ENCODE measurements at regions of chr5 and their contacts with region 1.

Region 1: DNA sequence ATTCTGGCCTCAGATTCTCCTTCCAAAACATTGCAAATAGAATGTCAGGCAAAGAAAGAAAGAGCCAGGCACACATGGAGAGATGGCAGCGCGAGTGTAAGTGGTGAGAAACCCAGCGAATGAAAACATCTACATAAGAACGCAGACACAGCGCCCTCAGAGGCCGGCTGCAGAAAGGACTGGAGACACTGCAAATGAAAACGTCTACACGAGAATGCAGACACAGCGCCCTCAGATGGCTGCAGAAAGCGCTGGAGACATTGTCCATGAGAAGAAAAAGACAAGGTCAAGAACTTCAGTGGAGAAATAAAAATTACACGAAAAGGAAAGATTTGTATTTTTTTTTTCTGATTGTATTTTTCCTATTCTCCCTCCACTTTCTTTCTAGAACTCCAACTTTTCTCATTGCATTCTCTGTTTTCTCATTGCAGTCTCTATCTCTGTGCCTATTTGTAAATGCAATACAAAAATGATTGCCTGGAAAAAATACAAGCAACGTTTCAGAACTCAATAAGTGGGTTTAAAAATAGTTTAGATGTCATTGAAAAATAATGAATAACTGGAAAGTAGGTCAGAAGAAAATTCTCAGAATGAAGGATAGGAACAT is 117.9 kb upstream of the LPCAT1 start:
- DNase-seq: peak; percentile 21
- ATAC-seq: peak; percentile 90
- H3K4me3 ChIP-seq: no peak overlapping the region
- H3K27ac ChIP-seq: no peak overlapping the region
- H3K4me1 ChIP-seq: no peaks in the 10 kb centered on the region
- H3K27me3 ChIP-seq: peaks cover 2 to 9% of the 10 kb centered on the region in 2 experiments; a peak in 2 of 4 replicates
- CTCF ChIP-seq: peak; percentile 90 to 99 (median 98); a peak in 5 of 6 replicates
- EP300 ChIP-seq: no peak
- POLR2A ChIP-seq: no peak
- RAD21 ChIP-seq: peak; percentile 91

Region 2: DNA sequence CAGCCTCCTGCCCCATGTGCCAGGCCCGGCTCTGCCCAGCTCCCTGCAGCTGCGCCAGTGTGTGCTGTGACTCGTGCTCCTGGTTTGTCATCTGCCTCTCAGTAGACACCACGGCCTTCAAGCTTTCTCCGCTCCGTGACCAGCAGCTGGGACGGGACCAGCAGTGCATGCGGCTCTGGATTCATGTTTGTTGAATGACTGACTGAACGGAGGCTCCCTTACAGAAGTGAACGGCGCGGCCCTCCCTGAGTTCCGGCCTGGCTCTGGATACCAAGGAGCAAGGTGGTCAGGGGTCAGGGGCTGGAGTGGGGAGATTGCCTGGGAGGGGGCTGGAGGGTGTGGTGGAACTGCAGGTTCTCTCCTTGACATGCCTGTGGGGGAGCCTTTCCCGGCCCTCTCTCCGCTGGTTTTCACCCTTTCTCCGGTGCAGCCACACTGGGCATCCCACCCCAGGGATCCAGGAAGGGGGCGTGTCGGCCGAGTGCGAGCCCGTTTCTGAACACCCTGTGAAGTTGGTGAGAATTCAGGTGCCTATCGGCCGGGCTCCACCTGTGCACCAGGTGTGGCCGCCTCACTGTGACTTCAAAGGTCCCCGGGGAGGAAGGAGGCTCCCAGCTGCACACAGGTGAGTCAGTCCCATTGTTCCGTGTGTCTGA is 1040.6 kb before region 1 on chr5:
- CTCF ChIA-PET with region 1: no interaction called
- POLR2A ChIA-PET with region 1: no interaction called
- RAD21 ChIA-PET with region 1: no interaction called
- SMC1A ChIA-PET with region 1: no interaction called
- in situ Hi-C with region 1: no loop called
- intact Hi-C with region 1: no loop called
- DNase-seq: no peak
- ATAC-seq: no peak
- H3K4me3 ChIP-seq: no peak overlapping the region
- H3K27ac ChIP-seq: no peak overlapping the region
- H3K4me1 ChIP-seq: no peaks in the 10 kb centered on the region
- H3K27me3 ChIP-seq: peaks cover 0 to 5% of the 10 kb centered on the region in 2 experiments; a peak in 2 of 4 replicates
- CTCF ChIP-seq: no peak
- EP300 ChIP-seq: no peak
- POLR2A ChIP-seq: no peak
- RAD21 ChIP-seq: no peak

Region 3: GRCh38 chr5:912280-913091 is 729.2 kb before region 1 on chr5:
- CTCF ChIA-PET with region 1: no interaction called
- POLR2A ChIA-PET with region 1: no interaction called
- RAD21 ChIA-PET with region 1: no interaction called
- SMC1A ChIA-PET with region 1: no interaction called
- in situ Hi-C with region 1: loop called (anchors 10 kb)
- intact Hi-C with region 1: no loop called
- DNase-seq: no peak
- ATAC-seq: no peak
- H3K4me3 ChIP-seq: no peak overlapping the region
- H3K27ac ChIP-seq: no peak overlapping the region
- H3K4me1 ChIP-seq: no peaks in the 10 kb centered on the region
- H3K27me3 ChIP-seq: no peaks in the 10 kb centered on the region
- CTCF ChIP-seq: peak in 1 of 3 experiments; percentile 29; a peak in 2 of 6 replicates
- EP300 ChIP-seq: no peak
- POLR2A ChIP-seq: peak; percentile 60
- RAD21 ChIP-seq: 0 out of 2 replicates have a peak, but pooled peaks have one; percentile 1

Region 4: GRCh38 chr5:1167728-1168709 is 473.6 kb before region 1 on chr5:
- CTCF ChIA-PET with region 1: interaction called, 14 read pairs
- POLR2A ChIA-PET with region 1: no interaction called
- RAD21 ChIA-PET with region 1: interaction called, 8 read pairs
- SMC1A ChIA-PET with region 1: interaction called, 8 read pairs
- in situ Hi-C with region 1: loop called (anchors 5 kb)
- intact Hi-C with region 1: loop called (anchors 2 kb)
- DNase-seq: no peak
- ATAC-seq: peak; percentile 93
- H3K4me3 ChIP-seq: no peak overlapping the region
- H3K27ac ChIP-seq: no peak overlapping the region
- H3K4me1 ChIP-seq: peaks cover 3% of the 10 kb centered on the region
- H3K27me3 ChIP-seq: no peaks in the 10 kb centered on the region; a peak in 1 of 4 replicates
- CTCF ChIP-seq: peak; percentile 71 to 89 (median 81)
- EP300 ChIP-seq: no peak
- POLR2A ChIP-seq: no peak
- RAD21 ChIP-seq: peak; percentile 82

Region 5: DNA sequence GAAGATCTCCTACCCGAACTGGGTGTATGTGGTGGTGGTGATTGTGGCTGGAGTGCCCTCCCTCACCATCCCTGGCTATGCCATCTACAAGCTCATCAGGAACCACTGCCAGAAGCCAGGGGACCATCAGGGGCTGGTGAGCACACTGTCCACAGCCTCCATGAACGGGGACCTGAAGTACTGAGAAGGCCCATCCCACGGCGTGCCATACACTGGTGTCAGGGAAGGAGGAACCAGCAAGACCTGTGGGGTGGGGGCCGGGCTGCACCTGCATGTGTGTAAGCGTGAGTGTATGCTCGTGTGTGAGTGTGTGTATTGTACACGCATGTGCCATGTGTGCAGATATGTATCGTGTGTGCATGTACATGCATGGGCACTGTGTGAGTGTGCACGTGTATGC is 419.9 kb before region 1 on chr5:
- CTCF ChIA-PET with region 1: no interaction called
- POLR2A ChIA-PET with region 1: no interaction called
- RAD21 ChIA-PET with region 1: no interaction called
- SMC1A ChIA-PET with region 1: no interaction called
- in situ Hi-C with region 1: no loop called
- intact Hi-C with region 1: no loop called
- DNase-seq: no peak
- ATAC-seq: no peak
- H3K4me3 ChIP-seq: no peak overlapping the region
- H3K27ac ChIP-seq: no peak overlapping the region
- H3K4me1 ChIP-seq: no peaks in the 10 kb centered on the region
- H3K27me3 ChIP-seq: no peaks in the 10 kb centered on the region; a peak in 1 of 4 replicates
- CTCF ChIP-seq: no peak
- EP300 ChIP-seq: no peak
- POLR2A ChIP-seq: no peak
- RAD21 ChIP-seq: no peak

Region 6: DNA sequence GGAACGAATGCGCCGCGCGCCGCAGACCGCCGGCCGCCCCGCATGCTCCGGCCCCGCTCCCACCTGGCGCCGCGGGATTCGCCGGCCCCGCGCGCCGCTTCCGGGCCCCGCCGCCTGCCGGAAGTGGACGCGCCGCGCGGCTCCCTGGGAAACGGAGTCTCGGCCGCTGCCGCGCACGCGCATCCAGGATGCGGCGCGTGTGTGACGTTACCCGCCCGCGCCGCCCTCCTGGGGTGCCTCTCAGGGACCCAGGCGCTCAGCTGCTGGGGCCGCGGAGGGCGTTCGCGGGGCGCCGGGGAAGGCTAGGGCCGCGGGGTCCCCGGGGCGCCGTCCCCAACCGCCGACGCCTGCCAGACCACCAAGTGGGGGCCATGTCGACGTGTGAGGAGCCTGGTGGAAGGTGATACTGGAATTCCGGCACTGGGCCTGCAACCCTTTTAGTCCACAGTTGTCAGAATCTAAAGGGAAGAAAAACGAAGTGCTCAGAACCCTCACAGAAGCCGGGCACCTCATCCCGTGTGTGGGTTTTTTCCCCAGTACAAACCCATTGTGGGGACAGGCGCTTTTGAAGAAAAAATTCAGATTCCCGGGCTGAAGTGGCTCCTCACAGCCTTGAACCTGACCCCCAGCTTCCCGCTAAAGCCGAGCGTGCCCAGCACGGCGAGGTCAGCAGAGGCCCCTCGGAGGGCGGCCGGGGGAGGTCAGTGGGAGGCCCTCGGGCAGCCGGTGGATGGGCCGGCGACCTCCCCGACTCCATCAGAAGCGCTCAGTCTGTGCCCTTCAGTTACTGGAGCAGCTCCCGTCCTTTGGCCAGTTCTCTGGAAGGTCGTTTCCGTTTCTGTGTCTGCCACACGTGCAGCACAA is 296.5 kb before region 1 on chr5 and contains the start of gene CLPTM1L:
- CTCF ChIA-PET with region 1: interaction called, 5 read pairs
- POLR2A ChIA-PET with region 1: no interaction called
- RAD21 ChIA-PET with region 1: interaction called, 3 read pairs
- SMC1A ChIA-PET with region 1: no interaction called
- in situ Hi-C with region 1: no loop called
- intact Hi-C with region 1: loop called (anchors 5 kb)
- DNase-seq: peak; percentile 50
- ATAC-seq: peak; percentile 79
- H3K4me3 ChIP-seq: peak within 1 kb of the TSS; percentile 98
- H3K27ac ChIP-seq: peak within 1 kb of the TSS; percentile 68
- H3K4me1 ChIP-seq: peaks cover 28% of the 10 kb centered on the region
- H3K27me3 ChIP-seq: no peaks in the 10 kb centered on the region
- CTCF ChIP-seq: no peak
- EP300 ChIP-seq: no peak
- POLR2A ChIP-seq: peak; percentile 87
- RAD21 ChIP-seq: no peak
- polyA plus RNA-seq, gene CLPTM1L: 2.9 to 22.8 TPM

Region 7: DNA sequence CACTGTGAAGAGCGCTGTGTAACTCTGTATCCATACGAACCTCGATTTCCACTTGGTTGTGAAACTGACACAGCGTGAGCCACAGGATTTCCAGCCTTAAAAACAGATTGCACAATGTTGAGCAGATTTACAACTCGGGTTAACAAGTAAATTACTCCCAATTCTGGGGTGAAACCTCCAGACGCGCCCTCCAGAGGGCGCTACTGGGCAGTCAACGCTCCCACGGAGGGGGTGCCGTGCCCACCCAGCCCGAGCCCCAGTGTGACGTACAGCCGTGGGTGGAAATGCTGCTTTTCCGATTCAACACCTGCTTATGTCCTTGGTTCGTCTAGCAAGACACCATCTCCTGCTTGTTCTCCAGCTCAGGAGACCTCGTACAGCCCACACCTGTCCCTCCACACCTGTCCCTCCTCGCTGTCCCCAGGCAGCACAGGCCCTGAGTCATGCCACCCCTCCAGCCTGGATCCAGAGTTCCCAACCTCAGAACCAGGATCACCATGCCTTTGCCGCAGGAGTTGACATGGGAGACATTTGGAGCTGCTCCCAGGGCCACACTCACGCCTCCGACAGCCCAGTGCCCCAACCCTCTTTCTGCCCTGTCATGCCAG is 162.0 kb before region 1 on chr5:
- CTCF ChIA-PET with region 1: interaction called, 13 read pairs
- POLR2A ChIA-PET with region 1: interaction called, 3 read pairs
- RAD21 ChIA-PET with region 1: no interaction called
- SMC1A ChIA-PET with region 1: interaction called, 5 read pairs
- in situ Hi-C with region 1: no loop called
- intact Hi-C with region 1: no loop called
- DNase-seq: no peak
- ATAC-seq: peak; percentile 35
- H3K4me3 ChIP-seq: no peak overlapping the region
- H3K27ac ChIP-seq: peak overlapping the region; percentile 5; the same call in 1 of the 2 replicates
- H3K4me1 ChIP-seq: peaks cover 25% of the 10 kb centered on the region
- H3K27me3 ChIP-seq: no peaks in the 10 kb centered on the region
- CTCF ChIP-seq: peak; percentile 77 to 82 (median 78)
- EP300 ChIP-seq: no peak
- POLR2A ChIP-seq: peak; percentile 41; the same call in 1 of the 2 replicates
- RAD21 ChIP-seq: peak; percentile 80

Region 8: DNA sequence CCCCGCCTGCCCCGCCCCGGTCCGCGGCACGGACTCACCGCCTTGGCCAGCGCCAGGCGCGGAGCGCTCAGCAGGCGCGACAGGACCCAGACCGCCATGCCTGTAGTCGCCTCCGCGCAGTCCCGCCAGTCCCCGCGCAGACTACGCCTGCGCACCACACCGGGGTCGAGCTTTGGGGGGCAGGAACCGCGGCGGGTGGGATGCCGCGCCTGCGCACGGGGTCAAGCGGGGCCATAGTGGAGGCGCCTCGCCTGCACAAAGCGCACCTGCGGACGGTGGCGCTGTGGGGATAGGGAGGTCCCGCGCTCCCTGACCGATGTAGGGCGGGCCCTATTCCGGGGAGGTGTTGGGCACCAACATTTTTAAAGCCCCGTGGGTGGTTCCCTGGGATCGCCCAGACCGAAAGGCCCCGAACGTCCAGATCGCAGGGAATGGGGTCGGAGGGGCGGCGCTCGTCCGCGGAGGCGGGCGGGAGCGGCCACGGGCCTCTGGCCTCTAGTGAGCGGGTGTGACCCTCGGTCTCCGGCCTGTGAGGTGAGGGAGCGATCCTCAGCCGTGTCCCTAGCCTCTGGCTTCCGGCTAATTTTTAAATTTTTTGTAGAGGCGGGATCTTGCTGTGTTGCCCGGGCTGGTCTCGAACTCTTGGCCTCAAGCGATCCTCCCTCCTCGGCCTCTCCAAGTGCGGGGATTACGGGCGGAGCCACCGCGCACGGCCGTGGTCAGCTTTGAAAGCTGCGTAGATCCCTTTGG is 47.1 kb before region 1 on chr5:
- CTCF ChIA-PET with region 1: interaction called, 3 read pairs
- POLR2A ChIA-PET with region 1: no interaction called
- RAD21 ChIA-PET with region 1: no interaction called
- SMC1A ChIA-PET with region 1: no interaction called
- in situ Hi-C with region 1: no loop called
- intact Hi-C with region 1: loop called (anchors 2 kb)
- DNase-seq: peak; percentile 70
- ATAC-seq: peak; percentile 97
- H3K4me3 ChIP-seq: peak overlapping the region; percentile 95
- H3K27ac ChIP-seq: peak overlapping the region; percentile 41
- H3K4me1 ChIP-seq: no peaks in the 10 kb centered on the region
- H3K27me3 ChIP-seq: no peaks in the 10 kb centered on the region
- CTCF ChIP-seq: peak; percentile 64 to 79 (median 78)
- EP300 ChIP-seq: no peak
- POLR2A ChIP-seq: peak; percentile 89
- RAD21 ChIP-seq: peak; percentile 40